ENCODE measurements at regions of chr12 and their contacts with region 1.

Region 1: GRCh38 chr12:57744777-57745484 is at the start of gene TSPAN31:
- DNase-seq: peak; percentile 96 to 97 (median 97)
- H3K4me3 ChIP-seq: peak within 1 kb of the TSS; percentile 69 to 84 (median 81)
- H3K4me3 Mint-ChIP-seq: peak within 1 kb of the TSS; percentile 89 to 93
- H3K27ac ChIP-seq: peak within 1 kb of the TSS; percentile 78 to 89
- H3K27ac Mint-ChIP-seq: peak within 1 kb of the TSS; percentile 92 to 98 (median 96)
- H3K4me1 ChIP-seq: peaks cover 40 to 45% of the 10 kb centered on the region in 2 donors
- H3K4me1 Mint-ChIP-seq: peaks cover 44% of the 10 kb centered on the region
- H3K27me3 ChIP-seq: no peaks in the 10 kb centered on the region
- H3K27me3 Mint-ChIP-seq: peaks cover 0 to 1% (median 0%) of the 10 kb centered on the region in 3 donors
- CTCF ChIP-seq: no peak
- polyA plus RNA-seq, gene TSPAN31: 20.6 to 48.1 (median 43.0) TPM

Region 2: DNA sequence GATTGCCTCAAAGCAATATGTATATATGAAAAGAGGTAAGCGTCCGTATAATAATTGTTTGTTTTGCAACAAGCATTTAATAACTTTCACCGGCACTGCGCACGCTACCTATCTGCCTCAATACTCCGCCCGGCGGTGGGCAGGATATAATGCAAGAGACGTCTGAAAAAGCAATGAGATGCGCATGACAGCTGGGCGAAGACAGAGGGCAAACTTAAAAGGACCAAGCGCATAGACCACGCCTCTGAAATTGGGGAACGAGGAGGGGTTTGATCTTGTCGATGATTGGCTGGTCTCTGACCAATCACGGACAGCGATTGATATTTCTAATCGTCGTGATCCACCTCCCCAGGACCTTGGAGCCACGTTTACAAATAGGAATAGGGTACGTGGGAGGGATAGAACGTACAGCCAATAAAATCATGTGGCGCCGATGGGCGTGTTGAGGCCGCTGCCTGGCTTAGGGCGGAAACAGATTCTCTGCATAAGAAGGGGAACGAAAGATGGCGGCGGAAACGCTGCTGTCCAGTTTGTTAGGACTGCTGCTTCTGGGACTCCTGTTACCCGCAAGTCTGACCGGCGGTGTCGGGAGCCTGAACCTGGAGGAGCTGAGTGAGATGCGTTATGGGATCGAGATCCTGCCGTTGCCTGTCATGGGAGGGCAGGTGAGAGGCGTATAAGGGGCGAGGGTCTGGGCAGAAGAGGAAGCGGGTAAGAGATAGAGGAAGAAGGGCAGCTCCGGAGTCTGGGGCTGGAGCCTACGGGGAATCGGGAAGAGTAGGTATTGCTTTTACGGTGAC is 51.1 kb before region 1 on chr12 and contains the start of gene OS9:
- intact Hi-C with region 1: loop called in 1 of 2 experiments (anchors 5 kb)
- DNase-seq: peak; percentile 99 to 100 (median 100)
- H3K4me3 ChIP-seq: peak within 1 kb of the TSS; percentile 63 to 86 (median 78)
- H3K4me3 Mint-ChIP-seq: no peak within 1 kb of the TSS
- H3K27ac ChIP-seq: peak within 1 kb of the TSS; percentile 66 to 92
- H3K27ac Mint-ChIP-seq: no peak within 1 kb of the TSS
- H3K4me1 ChIP-seq: peaks cover 13 to 18% of the 10 kb centered on the region in 2 donors
- H3K4me1 Mint-ChIP-seq: peaks cover 2% of the 10 kb centered on the region
- H3K27me3 ChIP-seq: no peaks in the 10 kb centered on the region
- H3K27me3 Mint-ChIP-seq: peaks cover 2 to 18% (median 7%) of the 10 kb centered on the region in 3 donors
- CTCF ChIP-seq: peak; percentile 84
- polyA plus RNA-seq, gene OS9: 90.9 to 484 (median 128) TPM

Region 3: GRCh38 chr12:57935839-57936512 is 191.0 kb after region 1 on chr12:
- intact Hi-C with region 1: loop called in 1 of 2 experiments (anchors 10 kb)
- DNase-seq: peak; percentile 81 to 94 (median 90)
- H3K4me3 ChIP-seq: peak overlapping the region; percentile 62 to 82 (median 71)
- H3K4me3 Mint-ChIP-seq: peak overlapping the region; percentile 93 to 97
- H3K27ac ChIP-seq: peak overlapping the region; percentile 72 to 91
- H3K27ac Mint-ChIP-seq: peak overlapping the region; percentile 96 to 99 (median 99)
- H3K4me1 ChIP-seq: peaks cover 43 to 62% of the 10 kb centered on the region in 2 donors
- H3K4me1 Mint-ChIP-seq: peaks cover 54% of the 10 kb centered on the region
- H3K27me3 ChIP-seq: no peaks in the 10 kb centered on the region
- H3K27me3 Mint-ChIP-seq: no peaks in the 10 kb centered on the region
- CTCF ChIP-seq: no peak